Activated T-helper 1 cell treated with anti-CD3 and anti-CD28 coated beads, Interleukin-12 subunit alpha, Interleukin-12 subunit beta, Interleukin-2, Interleukin-4 antibody, amounts not matched to agents 30 ng/mL and 10 ng/mL and 1 ng/mL, durations not matched to agents 14 hours and 24 hours and 36 hours (primary cell): ENCODE measurements at regions of chr18 and their contacts with region 1.

Region 1: GRCh38 chr18:11980555-11981382 is 538 bp upstream of the IMPA2 start:
- DNase-seq: peak; percentile 96
- H3K4me3 Mint-ChIP-seq: peak overlapping the region; percentile 80
- H3K27ac Mint-ChIP-seq: peak overlapping the region; percentile 83
- H3K4me1 Mint-ChIP-seq: peaks cover 15% of the 10 kb centered on the region
- H3K27me3 Mint-ChIP-seq: peaks cover 12% of the 10 kb centered on the region

Region 2: DNA sequence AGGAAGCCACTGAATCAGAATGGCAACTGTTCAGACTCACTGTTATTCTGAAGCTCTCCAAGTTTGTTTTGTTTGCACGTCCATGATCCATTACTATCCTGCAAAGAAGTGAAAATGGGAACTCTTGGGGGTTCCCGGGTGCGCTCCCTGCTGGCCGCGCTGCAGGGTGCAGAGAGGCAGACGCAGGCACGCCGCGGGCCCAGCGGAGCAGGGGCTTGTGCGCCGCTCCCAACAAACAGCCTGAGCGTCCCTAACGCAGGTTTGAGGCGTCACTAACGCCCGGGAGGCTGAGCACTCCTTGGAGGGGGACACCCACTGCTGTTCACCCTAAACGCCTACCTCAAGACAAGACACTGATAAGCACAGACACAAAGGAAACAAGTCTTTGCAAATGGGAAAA is 817.1 kb before region 1 on chr18:
- intact Hi-C with region 1: no loop called
- DNase-seq: no peak
- H3K4me3 Mint-ChIP-seq: no peak overlapping the region
- H3K27ac Mint-ChIP-seq: no peak overlapping the region
- H3K4me1 Mint-ChIP-seq: no peaks in the 10 kb centered on the region
- H3K27me3 Mint-ChIP-seq: peaks cover 3% of the 10 kb centered on the region

Region 3: DNA sequence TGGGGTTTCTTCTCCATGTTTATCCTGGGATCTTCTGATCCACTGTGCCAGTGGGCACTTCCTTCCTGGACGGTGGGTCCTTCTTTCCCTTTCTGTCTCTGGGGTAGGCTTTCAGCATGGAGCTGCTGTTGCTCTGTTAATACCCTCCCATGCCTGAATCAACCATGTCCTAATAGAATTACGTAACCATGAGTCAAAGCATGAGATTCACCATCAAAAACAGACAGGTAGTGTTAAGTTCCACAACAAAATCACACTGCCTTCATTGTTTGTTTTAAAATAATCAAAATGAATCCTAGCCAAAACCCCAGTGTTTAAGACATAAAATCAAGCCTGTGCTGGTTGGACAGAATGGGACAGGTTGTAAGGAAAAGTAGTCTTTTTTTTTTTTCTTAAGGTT is 254.2 kb before region 1 on chr18:
- intact Hi-C with region 1: no loop called
- DNase-seq: no peak
- H3K4me3 Mint-ChIP-seq: no peak overlapping the region
- H3K27ac Mint-ChIP-seq: no peak overlapping the region
- H3K4me1 Mint-ChIP-seq: no peaks in the 10 kb centered on the region
- H3K27me3 Mint-ChIP-seq: peaks cover 4% of the 10 kb centered on the region

Region 4: DNA sequence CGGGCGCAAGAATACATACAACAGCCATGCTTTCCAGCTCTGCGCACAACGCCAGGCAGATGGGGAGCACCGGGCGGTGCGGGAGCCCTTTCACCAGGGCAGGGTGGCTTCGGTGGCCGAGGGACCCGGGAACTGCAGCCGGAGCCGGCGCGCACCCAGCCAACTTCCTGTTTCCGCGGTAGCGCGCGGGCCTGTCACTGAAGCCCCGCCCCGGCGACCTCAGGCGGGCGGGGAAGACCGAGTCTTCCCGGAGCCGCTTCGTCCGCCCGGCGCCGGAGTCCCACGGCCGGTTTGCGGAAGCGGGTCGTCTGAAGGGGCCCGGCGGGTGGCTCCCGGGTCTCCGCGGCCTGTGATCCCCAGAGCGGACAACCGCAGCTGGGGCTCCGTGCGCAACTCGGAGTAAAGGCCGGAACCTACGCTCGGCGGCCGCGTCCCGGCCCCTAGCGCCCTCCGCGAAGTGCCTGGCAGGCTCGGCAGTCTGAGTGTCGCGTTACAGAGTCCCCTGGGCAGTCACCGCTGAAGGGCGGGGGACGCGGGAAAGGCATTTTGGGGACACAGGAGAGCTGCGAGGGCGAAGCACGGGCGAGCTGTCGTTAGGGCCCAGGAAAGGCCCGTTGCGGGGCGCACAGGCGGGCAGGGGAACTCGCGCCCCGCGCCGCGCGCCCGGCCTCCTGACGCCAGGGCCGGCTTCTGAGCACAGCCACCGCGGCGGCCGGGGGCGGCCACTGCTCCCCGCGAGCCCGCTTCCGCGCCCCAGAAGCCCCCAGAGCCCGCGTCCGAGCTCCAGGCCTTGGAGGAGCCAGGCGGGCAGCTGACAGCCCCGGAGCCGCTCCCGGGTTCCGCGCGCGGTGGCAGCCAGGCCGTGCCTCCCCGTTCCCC is 72.3 kb before region 1 on chr18 and contains the start of gene MPPE1:
- intact Hi-C with region 1: loop called (anchors 1 kb)
- DNase-seq: peak; percentile 87
- H3K4me3 Mint-ChIP-seq: peak within 1 kb of the TSS; percentile 94
- H3K27ac Mint-ChIP-seq: peak within 1 kb of the TSS; percentile 93
- H3K4me1 Mint-ChIP-seq: peaks cover 32% of the 10 kb centered on the region
- H3K27me3 Mint-ChIP-seq: no peaks in the 10 kb centered on the region
- total RNA-seq, gene MPPE1: 45.8 and 47.4 TPM in 2 replicates

Region 5: DNA sequence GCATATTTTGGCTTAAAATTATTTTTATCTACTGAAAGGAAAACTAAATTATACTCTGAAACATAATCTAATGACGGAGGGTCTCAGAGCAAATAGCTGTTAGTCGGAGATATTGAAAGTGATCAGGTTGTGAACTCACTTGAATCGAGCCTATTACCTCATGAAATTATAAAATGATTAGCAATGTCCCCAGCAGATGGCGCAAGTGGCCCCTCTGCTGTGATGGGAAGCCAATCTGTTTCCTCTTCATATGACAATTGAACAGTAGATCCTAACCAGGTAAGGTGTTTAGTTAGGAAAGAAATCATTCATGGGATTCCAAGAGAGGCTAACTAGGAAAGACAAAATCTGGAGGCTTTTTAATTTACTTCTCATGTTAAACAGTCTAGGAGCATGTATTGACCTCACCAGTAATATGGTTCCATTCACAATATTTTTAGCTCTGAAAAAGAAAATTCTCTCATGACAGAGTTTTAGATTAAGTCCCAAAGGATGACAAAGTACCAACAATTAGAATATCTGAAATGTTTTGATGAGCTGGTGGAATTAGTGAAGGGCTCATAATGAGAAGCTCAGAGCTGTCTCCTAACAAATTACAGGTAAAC is 42.8 kb before region 1 on chr18:
- intact Hi-C with region 1: loop called (anchors 1 kb)
- DNase-seq: peak; percentile 62
- H3K4me3 Mint-ChIP-seq: no peak overlapping the region
- H3K27ac Mint-ChIP-seq: no peak overlapping the region
- H3K4me1 Mint-ChIP-seq: no peaks in the 10 kb centered on the region
- H3K27me3 Mint-ChIP-seq: peaks cover 8% of the 10 kb centered on the region

Region 6: GRCh38 chr18:11947214-11948191 is 33.3 kb before region 1 on chr18:
- intact Hi-C with region 1: loop called (anchors 1 kb)
- DNase-seq: peak; percentile 43
- H3K4me3 Mint-ChIP-seq: peak overlapping the region; percentile 70
- H3K27ac Mint-ChIP-seq: peak overlapping the region; percentile 53
- H3K4me1 Mint-ChIP-seq: peaks cover 5% of the 10 kb centered on the region
- H3K27me3 Mint-ChIP-seq: no peaks in the 10 kb centered on the region

Region 7: GRCh38 chr18:11995445-11996189 is 14.8 kb after region 1 on chr18:
- intact Hi-C with region 1: loop called (anchors 1 kb)
- DNase-seq: peak; percentile 41
- H3K4me3 Mint-ChIP-seq: peak overlapping the region; percentile 48
- H3K27ac Mint-ChIP-seq: peak overlapping the region; percentile 57
- H3K4me1 Mint-ChIP-seq: peaks cover 21% of the 10 kb centered on the region
- H3K27me3 Mint-ChIP-seq: no peaks in the 10 kb centered on the region

Region 8: GRCh38 chr18:12027046-12027445 is 46.3 kb after region 1 on chr18:
- intact Hi-C with region 1: no loop called
- DNase-seq: no peak
- H3K4me3 Mint-ChIP-seq: no peak overlapping the region
- H3K27ac Mint-ChIP-seq: no peak overlapping the region
- H3K4me1 Mint-ChIP-seq: no peaks in the 10 kb centered on the region
- H3K27me3 Mint-ChIP-seq: no peaks in the 10 kb centered on the region

Region 9: GRCh38 chr18:12038639-12039417 is 58.1 kb after region 1 on chr18:
- intact Hi-C with region 1: loop called (anchors 2 kb)
- DNase-seq: peak; percentile 69
- H3K4me3 Mint-ChIP-seq: peak overlapping the region; percentile 69
- H3K27ac Mint-ChIP-seq: no peak overlapping the region
- H3K4me1 Mint-ChIP-seq: peaks cover 19% of the 10 kb centered on the region
- H3K27me3 Mint-ChIP-seq: peaks cover 5% of the 10 kb centered on the region

Region 10: DNA sequence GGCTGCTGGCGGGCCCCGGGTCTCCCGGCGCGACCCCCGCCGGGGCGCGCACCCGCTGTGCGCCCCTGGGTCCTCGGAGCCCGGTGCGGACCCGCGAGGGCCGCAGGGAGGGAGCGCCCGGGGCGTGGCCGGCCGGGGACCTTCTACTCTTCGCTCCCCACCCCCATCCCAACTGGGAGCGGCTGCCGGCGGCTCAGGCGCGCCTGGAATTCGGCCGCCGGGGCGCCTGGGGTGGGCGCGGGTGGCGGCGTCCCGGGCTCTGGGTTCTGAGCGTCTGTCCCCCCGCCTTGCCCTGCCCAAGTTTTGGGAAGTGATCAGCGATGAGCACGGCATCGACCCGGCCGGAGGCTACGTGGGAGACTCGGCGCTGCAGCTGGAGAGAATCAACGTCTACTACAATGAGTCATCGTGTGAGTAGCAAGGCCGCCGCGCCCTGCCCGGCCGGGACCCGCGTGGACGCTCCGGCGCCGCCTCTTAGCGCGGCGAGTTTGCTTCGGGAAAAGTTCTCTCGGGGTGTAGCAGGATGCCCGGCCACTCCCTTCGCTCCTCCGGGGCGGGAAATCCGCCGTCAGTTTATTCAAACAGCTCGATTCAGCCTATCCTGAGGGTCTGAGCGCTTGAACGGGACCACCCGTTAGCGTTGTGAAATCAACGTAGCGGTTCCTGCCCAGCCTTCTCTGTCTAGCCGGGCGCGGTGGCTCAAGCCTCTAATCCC is 327.8 kb after region 1 on chr18:
- intact Hi-C with region 1: loop called (anchors 5 kb)
- DNase-seq: peak; percentile 21
- H3K4me3 Mint-ChIP-seq: peak overlapping the region; percentile 80
- H3K27ac Mint-ChIP-seq: peak overlapping the region; percentile 76
- H3K4me1 Mint-ChIP-seq: peaks cover 19% of the 10 kb centered on the region
- H3K27me3 Mint-ChIP-seq: peaks cover 32% of the 10 kb centered on the region